HepG2 (cell line): ENCODE measurements at regions of chr9 and their contacts with region 1.

Region 1: DNA sequence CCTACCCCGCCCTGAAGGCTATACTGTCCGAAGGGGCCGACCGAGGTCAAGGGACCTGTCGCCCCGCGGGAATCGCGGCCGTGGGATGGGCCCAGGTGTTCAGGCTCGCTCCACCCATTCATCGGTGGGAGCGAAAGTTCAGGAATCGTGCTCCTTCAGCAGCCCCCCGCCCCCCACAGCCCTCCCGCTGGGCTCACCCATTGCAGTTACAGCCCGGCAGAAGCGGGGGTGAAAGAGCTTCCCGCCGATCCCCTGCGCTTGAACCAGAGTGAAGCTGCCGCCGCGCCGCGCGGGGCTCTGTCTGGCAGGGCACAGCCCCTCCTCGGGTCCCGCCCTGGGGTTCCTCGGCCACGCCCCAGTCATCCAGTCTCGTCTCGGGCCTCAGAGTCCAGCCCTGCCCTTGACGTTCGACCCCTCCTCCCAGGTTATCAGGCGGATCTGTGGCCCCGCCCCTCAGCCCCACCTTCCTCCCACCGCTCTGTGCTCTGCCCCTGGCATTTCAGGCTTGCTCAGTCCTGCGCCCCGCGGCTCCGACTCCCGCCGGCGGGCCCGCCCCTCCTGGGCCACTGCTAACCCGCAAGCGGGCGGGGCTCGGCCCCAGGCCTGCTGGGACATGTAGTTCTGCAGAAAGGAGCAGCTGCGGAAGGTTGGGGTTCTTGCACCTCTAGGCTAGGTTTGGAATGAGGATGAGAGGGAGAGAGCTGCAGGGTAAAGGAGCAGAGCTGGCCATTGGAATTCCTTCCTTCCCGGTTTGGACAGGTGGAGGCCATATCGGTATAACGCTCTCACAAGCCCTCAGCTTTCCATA is at the start of gene MYORG:
- DNase-seq: peak; percentile 95
- ATAC-seq: peak; percentile 71
- H3K4me3 ChIP-seq: peak within 1 kb of the TSS; percentile 73 to 90 (median 79)
- H3K27ac ChIP-seq: peak within 1 kb of the TSS; percentile 85
- H3K4me1 ChIP-seq: peaks cover 61% of the 10 kb centered on the region
- H3K27me3 ChIP-seq: no peaks in the 10 kb centered on the region; a peak in 1 of 5 replicates
- CTCF ChIP-seq: no peak; the same call in 1 of the 2 replicates
- EP300 ChIP-seq: peak in 1 of 2 experiments; percentile 56; a peak in 2 of 4 replicates
- POLR2A ChIP-seq: peak in 1 of 2 experiments; percentile 71; a peak in 2 of 4 replicates
- RAD21 ChIP-seq: peak; percentile 44
- total RNA-seq, gene MYORG: 14.3 and 22.4 TPM in 2 replicates

Region 2: GRCh38 chr9:34252670-34253459 is 123.9 kb before region 1 on chr9:
- CTCF ChIA-PET with region 1: interaction called, 5 read pairs
- POLR2A ChIA-PET with region 1: no interaction called
- in situ Hi-C with region 1: no loop called
- intact Hi-C with region 1: loop called (anchors 5 kb)
- DNase-seq: peak; percentile 50
- ATAC-seq: peak; percentile 72
- H3K4me3 ChIP-seq: no peak overlapping the region
- H3K27ac ChIP-seq: no peak overlapping the region
- H3K4me1 ChIP-seq: no peaks in the 10 kb centered on the region
- H3K27me3 ChIP-seq: no peaks in the 10 kb centered on the region
- CTCF ChIP-seq: peak; percentile 81
- EP300 ChIP-seq: no peak
- POLR2A ChIP-seq: no peak
- RAD21 ChIP-seq: peak; percentile 67

Region 3: GRCh38 chr9:34328987-34329832 is 47.6 kb before region 1 on chr9 and contains the starts of genes KIF24 and NUDT2:
- CTCF ChIA-PET with region 1: interaction called, 143 read pairs
- POLR2A ChIA-PET with region 1: interaction called, 162 read pairs
- in situ Hi-C with region 1: loop called (anchors 5 kb)
- intact Hi-C with region 1: loop called (anchors 1 kb)
- DNase-seq: peak; percentile 100
- ATAC-seq: peak; percentile 96
- H3K4me3 ChIP-seq: peak within 1 kb of the TSS; percentile 83 to 94 (median 89)
- H3K27ac ChIP-seq: peak within 1 kb of the TSS; percentile 89
- H3K4me1 ChIP-seq: peaks cover 50% of the 10 kb centered on the region
- H3K27me3 ChIP-seq: no peaks in the 10 kb centered on the region; a peak in 1 of 5 replicates
- CTCF ChIP-seq: 0 out of 2 replicates have a peak, but pooled peaks have one; percentile 11
- EP300 ChIP-seq: no peak
- POLR2A ChIP-seq: peak; percentile 88 to 94
- RAD21 ChIP-seq: no peak
- total RNA-seq, gene KIF24: 2.8 and 3.0 TPM in 2 replicates
- total RNA-seq, gene NUDT2: 19.9 and 28.0 TPM in 2 replicates

Region 4: GRCh38 chr9:34346873-34347799 is 29.7 kb before region 1 on chr9:
- CTCF ChIA-PET with region 1: no interaction called
- POLR2A ChIA-PET with region 1: interaction called, 70 read pairs
- in situ Hi-C with region 1: no loop called
- intact Hi-C with region 1: loop called (anchors 1 kb)
- DNase-seq: peak; percentile 61
- ATAC-seq: peak; percentile 73
- H3K4me3 ChIP-seq: peak overlapping the region; percentile 23 to 48 (median 34); a peak in 5 of 6 replicates
- H3K27ac ChIP-seq: peak overlapping the region; percentile 78
- H3K4me1 ChIP-seq: peaks cover 90% of the 10 kb centered on the region
- H3K27me3 ChIP-seq: no peaks in the 10 kb centered on the region
- CTCF ChIP-seq: no peak
- EP300 ChIP-seq: no peak
- POLR2A ChIP-seq: no peak
- RAD21 ChIP-seq: no peak